H1 (cell line): ENCODE measurements at regions of chr9 and their contacts with region 1.

Region 1: DNA sequence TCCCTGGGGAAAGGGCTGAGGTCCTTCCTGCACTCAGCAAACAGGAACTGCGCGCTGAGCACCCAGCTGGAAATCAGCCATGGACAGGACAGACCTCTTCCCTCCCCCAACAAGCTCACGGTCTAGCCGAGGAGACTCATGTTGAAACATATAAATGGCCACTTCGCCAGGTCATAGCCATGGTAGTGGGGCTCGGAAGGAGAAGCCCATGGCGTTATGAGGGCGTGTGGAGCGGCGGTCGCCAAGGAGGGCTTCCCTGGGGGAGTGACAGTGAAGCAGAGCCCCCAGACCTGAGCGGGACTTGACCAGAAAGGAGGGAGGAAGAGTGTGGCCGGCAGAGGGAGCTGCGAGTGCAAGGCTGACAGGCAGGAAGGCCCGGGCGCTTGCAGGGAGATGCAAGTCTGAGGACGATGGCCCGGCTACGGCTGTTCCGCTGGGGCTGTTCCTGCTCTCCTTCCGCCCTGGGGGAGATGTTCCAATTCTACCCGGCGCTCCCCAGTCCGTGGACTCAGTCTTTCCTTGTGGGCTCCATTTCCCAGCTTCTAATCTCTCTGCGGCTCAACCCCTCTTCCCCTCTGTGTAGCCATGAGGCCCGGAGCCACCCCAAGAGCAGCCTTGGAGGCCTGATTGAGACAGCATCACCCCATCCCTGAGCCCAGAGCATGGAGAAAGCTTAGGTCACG is 43.9 kb upstream of the PRRC2B start:
- DNase-seq: peak; percentile 87 to 96
- H3K4me3 ChIP-seq: peak overlapping the region in 3 of 4 experiments; percentile 20 to 55 (median 27); a peak in 4 of 8 replicates
- H3K27ac ChIP-seq: no peak overlapping the region
- H3K4me1 ChIP-seq: peaks cover 0 to 8% (median 5%) of the 10 kb centered on the region in 4 experiments; a peak in 6 of 7 replicates
- H3K27me3 ChIP-seq: no peaks in the 10 kb centered on the region
- CTCF ChIP-seq: peak; percentile 81 to 90 (median 85)
- EP300 ChIP-seq: no peak
- POLR2A ChIP-seq: peak in 1 of 2 experiments; percentile 50; a peak in 1 of 3 replicates
- RAD21 ChIP-seq: peak; percentile 83 to 87

Region 2: GRCh38 chr9:131253891-131254491 is 96.0 kb before region 1 on chr9:
- CTCF ChIA-PET with region 1: interaction called, 11 read pairs
- POLR2A ChIA-PET with region 1: no interaction called
- DNase-seq: no peak
- H3K4me3 ChIP-seq: no peak overlapping the region
- H3K27ac ChIP-seq: no peak overlapping the region
- H3K4me1 ChIP-seq: peaks cover 0 to 9% (median 1%) of the 10 kb centered on the region in 4 experiments; a peak in 1 of 7 replicates
- H3K27me3 ChIP-seq: no peaks in the 10 kb centered on the region
- CTCF ChIP-seq: no peak
- EP300 ChIP-seq: no peak
- POLR2A ChIP-seq: no peak
- RAD21 ChIP-seq: no peak

Region 3: DNA sequence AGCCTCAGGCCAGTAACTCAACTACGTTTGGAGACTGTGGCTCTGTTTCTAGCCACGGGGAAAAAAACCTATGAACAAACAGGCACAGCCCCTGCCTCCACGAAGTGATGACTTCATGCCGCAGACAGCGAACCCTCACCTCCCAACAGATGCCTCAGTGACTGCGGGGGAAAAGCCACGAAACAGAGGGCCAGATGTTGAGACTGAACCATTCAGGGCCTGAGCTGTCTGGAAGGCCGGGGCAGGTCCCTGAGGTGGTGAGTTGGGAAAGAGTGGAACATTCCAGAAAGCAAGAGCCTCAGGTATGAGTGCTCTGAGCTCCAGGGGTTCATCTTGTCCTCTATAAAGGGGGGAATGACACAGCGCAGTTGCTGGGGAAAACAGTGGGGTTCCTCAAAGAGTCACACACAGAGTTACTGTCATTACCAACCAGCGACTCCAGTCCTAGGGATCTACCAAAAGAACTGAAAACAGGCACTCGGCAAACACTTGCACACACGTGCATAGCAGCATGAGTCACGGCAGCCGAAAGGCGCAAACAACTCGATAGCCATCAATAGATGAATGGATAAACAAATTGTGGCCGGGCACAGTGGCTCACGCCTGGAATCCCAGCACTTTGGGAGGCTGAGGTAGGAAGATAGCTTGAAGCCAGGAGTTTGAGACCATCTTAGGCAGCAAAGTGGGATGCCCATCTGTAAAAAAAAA is 45.2 kb before region 1 on chr9:
- CTCF ChIA-PET with region 1: no interaction called
- POLR2A ChIA-PET with region 1: no interaction called
- DNase-seq: no peak
- H3K4me3 ChIP-seq: no peak overlapping the region
- H3K27ac ChIP-seq: no peak overlapping the region
- H3K4me1 ChIP-seq: peaks cover 0 to 5% (median 3%) of the 10 kb centered on the region in 4 experiments; a peak in 2 of 7 replicates
- H3K27me3 ChIP-seq: no peaks in the 10 kb centered on the region
- CTCF ChIP-seq: no peak
- EP300 ChIP-seq: no peak
- POLR2A ChIP-seq: no peak
- RAD21 ChIP-seq: no peak

Region 4: GRCh38 chr9:131361202-131361833 is 11.3 kb after region 1 on chr9:
- CTCF ChIA-PET with region 1: interaction called, 36 read pairs
- POLR2A ChIA-PET with region 1: interaction called, 4 read pairs
- DNase-seq: no peak
- H3K4me3 ChIP-seq: no peak overlapping the region
- H3K27ac ChIP-seq: no peak overlapping the region
- H3K4me1 ChIP-seq: peaks cover 2 to 13% (median 10%) of the 10 kb centered on the region in 4 experiments
- H3K27me3 ChIP-seq: no peaks in the 10 kb centered on the region
- CTCF ChIP-seq: no peak
- EP300 ChIP-seq: no peak
- POLR2A ChIP-seq: no peak
- RAD21 ChIP-seq: no peak

Region 5: GRCh38 chr9:131382850-131383729 is 33.1 kb after region 1 on chr9:
- CTCF ChIA-PET with region 1: interaction called, 19 read pairs
- POLR2A ChIA-PET with region 1: interaction called, 6 read pairs
- DNase-seq: peak in 1 of 2 experiments; percentile 52
- H3K4me3 ChIP-seq: no peak overlapping the region
- H3K27ac ChIP-seq: 0 out of 2 replicates have a peak overlapping the region, but pooled peaks have one; percentile 31
- H3K4me1 ChIP-seq: peaks cover 4 to 12% (median 6%) of the 10 kb centered on the region in 4 experiments; a peak in 6 of 7 replicates
- H3K27me3 ChIP-seq: no peaks in the 10 kb centered on the region
- CTCF ChIP-seq: no peak
- EP300 ChIP-seq: no peak
- POLR2A ChIP-seq: no peak
- RAD21 ChIP-seq: 0 out of 4 replicates have a peak, but pooled peaks of 1 of the 2 experiments have one; percentile 16

Region 6: GRCh38 chr9:131407717-131408195 is 57.7 kb after region 1 on chr9:
- CTCF ChIA-PET with region 1: interaction called, 20 read pairs
- POLR2A ChIA-PET with region 1: interaction called, 3 read pairs
- DNase-seq: peak in 1 of 2 experiments; percentile 65
- H3K4me3 ChIP-seq: peak overlapping the region in 3 of 4 experiments; percentile 6 to 44 (median 11); a peak in 4 of 8 replicates
- H3K27ac ChIP-seq: peak overlapping the region; percentile 59; the same call in 1 of the 2 replicates
- H3K4me1 ChIP-seq: peaks cover 40 to 61% (median 47%) of the 10 kb centered on the region in 4 experiments
- H3K27me3 ChIP-seq: no peaks in the 10 kb centered on the region
- CTCF ChIP-seq: peak; percentile 59 to 64 (median 63)
- EP300 ChIP-seq: no peak
- POLR2A ChIP-seq: peak in 1 of 2 experiments; percentile 33; a peak in 1 of 3 replicates
- RAD21 ChIP-seq: peak; percentile 58 to 72

Region 7: DNA sequence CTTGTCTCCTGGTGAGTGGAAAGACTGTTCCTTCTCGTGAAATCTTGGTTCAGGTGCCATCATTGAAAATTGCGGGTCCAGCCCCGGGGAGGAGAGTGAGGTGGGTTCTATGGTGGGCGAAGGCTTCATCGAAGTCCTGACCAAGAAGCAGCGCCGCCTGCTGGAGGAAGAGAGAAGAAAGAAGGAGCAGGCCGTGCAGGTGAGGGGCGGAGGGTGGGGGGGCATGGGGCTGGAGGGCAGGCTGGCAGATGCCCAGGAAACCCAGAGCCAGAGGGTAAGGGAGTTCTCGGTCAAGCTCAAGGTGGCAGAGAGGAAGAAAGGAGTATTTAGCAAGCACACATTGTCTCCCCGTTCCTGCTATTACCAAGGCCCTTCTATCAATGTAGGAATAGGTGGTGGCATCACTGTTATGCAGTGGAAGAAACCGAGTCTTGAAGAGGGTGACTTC is 128.4 kb after region 1 on chr9:
- CTCF ChIA-PET with region 1: interaction called, 11 read pairs
- POLR2A ChIA-PET with region 1: no interaction called
- DNase-seq: peak; percentile 33 to 85
- H3K4me3 ChIP-seq: no peak overlapping the region
- H3K27ac ChIP-seq: no peak overlapping the region
- H3K4me1 ChIP-seq: no peaks in the 10 kb centered on the region
- H3K27me3 ChIP-seq: no peaks in the 10 kb centered on the region
- CTCF ChIP-seq: peak; percentile 55 to 85 (median 68)
- EP300 ChIP-seq: no peak
- POLR2A ChIP-seq: no peak
- RAD21 ChIP-seq: peak; percentile 43 to 49